GM12878 (cell line): ENCODE measurements at regions of chr2 and their contacts with region 1.

Region 1: DNA sequence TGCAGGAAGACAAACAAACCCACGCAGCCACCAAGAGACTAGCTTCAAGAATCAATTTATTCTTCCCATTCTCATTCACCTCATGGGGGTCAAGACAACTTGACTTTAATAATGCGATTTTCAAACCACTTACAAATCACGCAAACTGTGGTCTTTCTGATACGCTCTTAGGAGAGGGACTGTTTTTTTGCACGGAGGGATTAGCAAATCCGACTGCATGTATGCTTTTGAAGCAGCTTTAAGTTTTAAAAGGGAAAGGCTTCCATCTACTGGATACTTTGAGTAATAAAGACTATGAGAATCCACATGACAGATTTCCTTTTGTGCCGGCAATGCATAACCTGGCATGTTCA is 322.9 kb upstream of the KCNJ3 start:
- DNase-seq: no peak
- ATAC-seq: peak; percentile 73
- H3K4me3 ChIP-seq: no peak overlapping the region
- H3K27ac ChIP-seq: no peak overlapping the region
- H3K4me1 ChIP-seq: no peaks in the 10 kb centered on the region
- H3K27me3 ChIP-seq: no peaks in the 10 kb centered on the region
- CTCF ChIP-seq: peak in 2 of 3 experiments; percentile 9 to 19; a peak in 2 of 6 replicates
- EP300 ChIP-seq: no peak
- POLR2A ChIP-seq: no peak
- RAD21 ChIP-seq: peak; percentile 35; the same call in 1 of the 2 replicates

Region 2: GRCh38 chr2:152755029-152755428 is 1620.5 kb before region 1 on chr2:
- CTCF ChIA-PET with region 1: no interaction called
- POLR2A ChIA-PET with region 1: no interaction called
- RAD21 ChIA-PET with region 1: no interaction called
- SMC1A ChIA-PET with region 1: no interaction called
- in situ Hi-C with region 1: no loop called
- intact Hi-C with region 1: loop called (anchors 10 kb)
- DNase-seq: peak; percentile 26
- ATAC-seq: peak; percentile 53
- H3K4me3 ChIP-seq: no peak overlapping the region
- H3K27ac ChIP-seq: no peak overlapping the region
- H3K4me1 ChIP-seq: no peaks in the 10 kb centered on the region
- H3K27me3 ChIP-seq: no peaks in the 10 kb centered on the region
- CTCF ChIP-seq: peak; percentile 35 to 66 (median 60); a peak in 5 of 6 replicates
- EP300 ChIP-seq: no peak
- POLR2A ChIP-seq: no peak
- RAD21 ChIP-seq: no peak

Region 3: DNA sequence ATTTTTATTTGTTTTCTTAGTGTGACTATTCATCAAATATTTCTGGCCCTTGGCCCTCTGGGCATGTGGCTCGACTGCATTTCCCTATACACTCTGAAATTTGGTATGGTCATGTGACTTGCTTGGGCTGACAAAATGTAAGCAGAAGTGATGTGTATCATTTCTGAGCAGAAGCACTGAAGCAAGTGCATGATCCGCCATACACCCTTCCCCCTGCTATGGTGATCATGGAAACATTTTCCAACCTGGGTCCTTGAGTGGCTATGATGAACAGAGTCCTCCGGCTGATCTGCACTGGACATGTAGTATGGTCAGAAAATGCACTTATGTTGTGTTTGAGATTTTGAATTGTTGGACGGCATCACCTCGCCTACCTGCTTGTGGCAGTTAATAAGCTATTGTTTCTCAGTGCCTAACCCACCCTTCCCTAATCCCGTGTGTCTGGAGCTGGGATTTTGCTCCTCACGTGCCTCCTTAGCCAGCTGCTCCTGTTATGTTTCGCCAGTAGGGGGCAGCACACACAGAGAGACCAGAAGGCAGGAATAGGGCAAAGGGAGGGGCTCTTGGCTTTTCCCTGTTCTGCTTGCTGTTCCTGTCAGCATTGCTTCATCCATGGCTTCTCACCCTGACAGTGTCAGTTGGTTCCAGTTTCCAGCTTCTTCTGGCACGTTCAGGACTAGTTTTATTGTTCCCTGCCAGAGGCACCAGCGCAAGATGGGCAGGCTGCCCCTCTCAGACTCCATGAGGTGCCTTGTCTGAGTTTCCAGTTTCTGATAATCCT is 1449.8 kb before region 1 on chr2:
- CTCF ChIA-PET with region 1: no interaction called
- POLR2A ChIA-PET with region 1: no interaction called
- RAD21 ChIA-PET with region 1: no interaction called
- SMC1A ChIA-PET with region 1: no interaction called
- in situ Hi-C with region 1: no loop called
- intact Hi-C with region 1: loop called (anchors 10 kb)
- DNase-seq: peak; percentile 11
- ATAC-seq: peak; percentile 98
- H3K4me3 ChIP-seq: no peak overlapping the region
- H3K27ac ChIP-seq: no peak overlapping the region
- H3K4me1 ChIP-seq: no peaks in the 10 kb centered on the region
- H3K27me3 ChIP-seq: no peaks in the 10 kb centered on the region
- CTCF ChIP-seq: peak; percentile 65 to 86 (median 81)
- EP300 ChIP-seq: no peak
- POLR2A ChIP-seq: no peak
- RAD21 ChIP-seq: peak; percentile 79

Region 4: DNA sequence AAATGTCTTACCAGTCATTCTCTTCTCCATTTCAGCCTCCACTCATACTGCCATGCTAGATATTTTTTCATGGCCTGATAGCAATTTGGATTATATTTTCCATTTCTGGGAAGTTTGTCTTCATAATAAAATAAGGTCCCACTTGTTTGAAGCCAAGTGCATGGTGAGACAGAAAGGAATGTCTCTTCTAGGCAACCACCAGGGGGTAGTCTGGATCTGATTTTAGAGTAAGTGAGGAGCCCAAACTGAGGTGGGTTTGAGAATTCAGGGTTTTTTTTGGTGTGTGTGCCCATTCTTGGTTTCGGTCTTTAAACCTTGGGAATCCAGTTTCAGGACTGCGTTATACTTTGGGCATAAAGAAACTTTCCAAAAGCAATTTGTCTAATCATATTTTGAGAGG is 1212.5 kb before region 1 on chr2:
- CTCF ChIA-PET with region 1: no interaction called
- POLR2A ChIA-PET with region 1: no interaction called
- RAD21 ChIA-PET with region 1: no interaction called
- SMC1A ChIA-PET with region 1: no interaction called
- in situ Hi-C with region 1: no loop called
- intact Hi-C with region 1: loop called (anchors 10 kb)
- DNase-seq: no peak
- ATAC-seq: peak; percentile 79
- H3K4me3 ChIP-seq: no peak overlapping the region
- H3K27ac ChIP-seq: no peak overlapping the region
- H3K4me1 ChIP-seq: no peaks in the 10 kb centered on the region
- H3K27me3 ChIP-seq: no peaks in the 10 kb centered on the region; a peak in 1 of 4 replicates
- CTCF ChIP-seq: peak; percentile 48 to 55 (median 51); a peak in 5 of 6 replicates
- EP300 ChIP-seq: no peak
- POLR2A ChIP-seq: no peak
- RAD21 ChIP-seq: peak; percentile 73

Region 5: GRCh38 chr2:153787612-153788011 is 587.9 kb before region 1 on chr2:
- CTCF ChIA-PET with region 1: no interaction called
- POLR2A ChIA-PET with region 1: no interaction called
- RAD21 ChIA-PET with region 1: no interaction called
- SMC1A ChIA-PET with region 1: no interaction called
- in situ Hi-C with region 1: no loop called
- intact Hi-C with region 1: loop called (anchors 10 kb)
- DNase-seq: no peak
- ATAC-seq: no peak
- H3K4me3 ChIP-seq: no peak overlapping the region
- H3K27ac ChIP-seq: no peak overlapping the region
- H3K4me1 ChIP-seq: no peaks in the 10 kb centered on the region
- H3K27me3 ChIP-seq: no peaks in the 10 kb centered on the region
- CTCF ChIP-seq: no peak
- EP300 ChIP-seq: no peak
- POLR2A ChIP-seq: no peak
- RAD21 ChIP-seq: no peak